ENCODE measurements at regions of chr1 and their contacts with region 1.

Region 1: DNA sequence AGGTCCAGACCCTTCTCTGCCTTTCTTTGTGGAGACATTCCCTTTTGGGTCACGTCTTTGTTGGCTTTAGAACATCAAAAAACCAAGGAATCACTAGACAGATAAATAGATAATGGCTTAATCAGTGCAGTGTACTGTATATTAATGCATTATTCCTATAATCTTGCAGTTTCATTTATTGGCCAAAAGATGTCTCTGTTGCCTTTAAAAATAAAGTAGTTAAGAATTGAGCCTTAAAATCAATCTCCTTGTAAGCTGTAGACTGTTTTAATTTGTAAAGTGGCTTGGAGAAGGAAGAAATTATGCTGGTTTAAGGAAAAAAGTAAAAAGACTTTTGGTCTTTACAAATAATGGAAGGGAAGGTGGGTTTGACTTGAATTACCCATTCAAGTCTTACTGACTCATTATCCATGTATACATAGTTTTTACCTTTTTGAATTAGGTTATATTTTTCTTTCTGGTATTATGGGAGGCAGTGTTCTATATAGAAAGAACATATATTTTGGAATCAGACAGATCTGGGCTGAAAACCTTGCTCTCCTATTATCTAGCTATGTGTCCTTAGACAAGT is 84.6 kb downstream of the VPS13D start:
- DNase-seq: no peak
- ATAC-seq: peak; percentile 53
- H3K4me3 ChIP-seq: no peak overlapping the region
- H3K27ac ChIP-seq: no peak overlapping the region
- H3K4me1 ChIP-seq: peaks cover 0 to 3% of the 10 kb centered on the region in 2 donors
- H3K27me3 ChIP-seq: no peaks in the 10 kb centered on the region

Region 2: GRCh38 chr1:12386130-12386529 is 71.7 kb after region 1 on chr1:
- intact Hi-C with region 1: no loop called
- DNase-seq: no peak
- ATAC-seq: no peak
- H3K4me3 ChIP-seq: no peak overlapping the region
- H3K27ac ChIP-seq: no peak overlapping the region
- H3K4me1 ChIP-seq: no peaks in the 10 kb centered on the region
- H3K27me3 ChIP-seq: no peaks in the 10 kb centered on the region

Region 3: GRCh38 chr1:12407050-12407961 is 92.9 kb after region 1 on chr1:
- intact Hi-C with region 1: loop called in 1 of 2 experiments (anchors 10 kb)
- DNase-seq: no peak
- ATAC-seq: peak; percentile 65
- H3K4me3 ChIP-seq: no peak overlapping the region
- H3K27ac ChIP-seq: peak overlapping the region; percentile 19 to 57
- H3K4me1 ChIP-seq: peaks cover 4 to 6% of the 10 kb centered on the region in 2 donors
- H3K27me3 ChIP-seq: no peaks in the 10 kb centered on the region

Region 4: GRCh38 chr1:12636098-12636950 is 321.9 kb after region 1 on chr1:
- intact Hi-C with region 1: loop called in 1 of 2 experiments (anchors 5 kb)
- DNase-seq: peak; percentile 62 to 82
- ATAC-seq: peak; percentile 63
- H3K4me3 ChIP-seq: no peak overlapping the region
- H3K27ac ChIP-seq: no peak overlapping the region
- H3K4me1 ChIP-seq: no peaks in the 10 kb centered on the region
- H3K27me3 ChIP-seq: no peaks in the 10 kb centered on the region

Measured in aorta (tissue), 5 donors.